CD4-positive, alpha-beta memory T cell (primary cell): ENCODE measurements at regions of chr12 and their contacts with region 1.

Region 1: GRCh38 chr12:47216150-47216677 is 136.5 kb upstream of the AMIGO2 start:
- DNase-seq: peak; percentile 71 to 87 (median 78)
- H3K4me3 ChIP-seq: peak overlapping the region; percentile 70 to 73
- H3K4me3 Mint-ChIP-seq: peak overlapping the region; percentile 92 to 99 (median 96)
- H3K27ac ChIP-seq: peak overlapping the region; percentile 65
- H3K27ac Mint-ChIP-seq: peak overlapping the region; percentile 92 to 97 (median 94)
- H3K4me1 ChIP-seq: peaks cover 32% of the 10 kb centered on the region
- H3K4me1 Mint-ChIP-seq: peaks cover 14 to 73% (median 27%) of the 10 kb centered on the region in 4 donors
- H3K27me3 ChIP-seq: no peaks in the 10 kb centered on the region
- H3K27me3 Mint-ChIP-seq: no peaks in the 10 kb centered on the region

Region 2: DNA sequence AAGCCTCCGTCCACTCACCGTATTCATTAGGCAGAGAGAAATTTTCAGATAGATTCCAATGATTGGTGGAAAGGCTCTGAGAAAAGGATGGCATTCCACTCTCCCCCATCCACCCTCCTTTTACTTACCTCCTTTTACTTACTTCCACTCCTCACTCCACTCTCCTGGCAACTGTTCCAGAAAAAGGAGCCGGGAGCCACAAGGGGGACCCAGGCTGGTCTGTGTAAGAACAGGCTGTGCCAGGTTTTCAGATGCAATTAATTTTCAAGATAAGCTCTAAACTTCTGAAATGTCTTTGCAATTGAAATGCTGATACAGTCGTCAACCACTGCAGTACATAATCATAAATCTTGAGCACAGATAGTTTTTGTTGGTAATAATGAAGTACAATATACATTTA is 1751.5 kb before region 1 on chr12:
- CTCF ChIA-PET with region 1: no interaction called
- POLR2A ChIA-PET with region 1: no interaction called
- intact Hi-C with region 1: no loop called
- DNase-seq: no peak
- H3K4me3 ChIP-seq: no peak overlapping the region
- H3K4me3 Mint-ChIP-seq: no peak overlapping the region
- H3K27ac ChIP-seq: no peak overlapping the region
- H3K27ac Mint-ChIP-seq: no peak overlapping the region
- H3K4me1 ChIP-seq: peaks cover 5% of the 10 kb centered on the region
- H3K4me1 Mint-ChIP-seq: peaks cover under 1 to 5% (median 2%) of the 10 kb centered on the region in 4 donors
- H3K27me3 ChIP-seq: no peaks in the 10 kb centered on the region
- H3K27me3 Mint-ChIP-seq: peaks cover 12 to 13% of the 10 kb centered on the region in 2 donors

Region 3: DNA sequence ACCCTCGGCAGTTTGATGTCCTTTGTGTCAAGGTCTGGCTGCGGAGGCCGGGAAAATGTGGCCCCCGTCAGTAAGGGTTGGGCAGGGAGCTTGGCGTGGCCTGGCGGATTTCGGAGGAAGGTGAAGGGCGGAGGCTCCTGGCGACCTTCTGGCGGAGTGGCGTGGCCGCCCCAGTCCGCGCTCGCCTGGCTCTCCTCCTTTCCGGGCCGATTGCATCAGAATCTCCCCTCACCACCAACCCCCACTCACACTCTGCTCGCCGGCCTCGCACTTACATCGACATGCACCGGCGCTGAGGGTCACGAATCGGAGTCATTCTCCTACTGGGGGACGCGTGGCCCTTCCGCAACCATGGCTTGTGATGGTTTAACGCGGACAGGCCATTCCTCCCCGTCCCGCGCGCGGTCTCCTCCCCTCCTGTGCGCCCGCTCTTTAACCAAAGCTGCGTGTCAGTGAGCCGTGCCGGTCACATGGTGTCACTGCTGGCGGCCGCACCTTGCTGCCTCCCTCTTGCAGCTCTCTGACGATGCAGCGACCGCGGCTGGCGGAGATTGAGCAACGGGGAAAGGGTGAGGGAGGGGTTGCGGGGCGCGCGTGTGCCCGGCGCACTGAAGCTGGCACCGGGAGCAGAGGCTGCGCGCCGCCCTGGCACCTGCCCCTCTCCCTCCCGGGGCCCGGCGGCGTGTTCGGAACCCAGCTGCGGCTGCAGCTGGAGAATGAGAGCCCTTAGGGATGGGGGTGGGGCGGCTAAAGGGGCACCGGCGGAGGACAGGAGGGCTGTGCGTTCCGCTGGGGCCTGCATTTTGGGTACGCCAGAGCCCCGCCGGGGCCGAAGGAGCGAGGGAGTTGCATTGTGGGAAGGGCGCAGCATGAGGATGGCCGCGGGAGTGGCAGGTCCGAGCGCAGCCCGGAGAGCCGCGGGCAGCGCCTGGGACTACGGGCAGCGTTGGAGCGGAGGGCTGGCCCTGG is 947.3 kb before region 1 on chr12 and contains the start of gene SLC38A1:
- CTCF ChIA-PET with region 1: no interaction called
- POLR2A ChIA-PET with region 1: interaction called, 5 read pairs
- intact Hi-C with region 1: loop called (anchors 5 kb)
- DNase-seq: peak; percentile 88 to 96 (median 89)
- H3K4me3 ChIP-seq: peak within 1 kb of the TSS; percentile 91 to 96
- H3K4me3 Mint-ChIP-seq: no peak within 1 kb of the TSS
- H3K27ac ChIP-seq: peak within 1 kb of the TSS; percentile 95
- H3K27ac Mint-ChIP-seq: no peak within 1 kb of the TSS
- H3K4me1 ChIP-seq: peaks cover 54% of the 10 kb centered on the region
- H3K4me1 Mint-ChIP-seq: peaks cover 16 to 47% (median 23%) of the 10 kb centered on the region in 4 donors
- H3K27me3 ChIP-seq: no peaks in the 10 kb centered on the region
- H3K27me3 Mint-ChIP-seq: no peaks in the 10 kb centered on the region
- total RNA-seq, gene SLC38A1: 265 to 272 TPM

Region 4: GRCh38 chr12:47079468-47079980 is 136.7 kb before region 1 on chr12 and contains the starts of genes AMIGO2 and PCED1B:
- CTCF ChIA-PET with region 1: interaction called, 16 read pairs
- POLR2A ChIA-PET with region 1: interaction called, 154 read pairs
- intact Hi-C with region 1: loop called (anchors 2 kb)
- DNase-seq: peak; percentile 43 to 63 (median 51)
- H3K4me3 ChIP-seq: peak within 1 kb of the TSS; percentile 91 to 92
- H3K4me3 Mint-ChIP-seq: peak within 1 kb of the TSS; percentile 96 to 99 (median 98)
- H3K27ac ChIP-seq: peak within 1 kb of the TSS; percentile 74
- H3K27ac Mint-ChIP-seq: peak within 1 kb of the TSS; percentile 92 to 99 (median 98)
- H3K4me1 ChIP-seq: peaks cover 66% of the 10 kb centered on the region
- H3K4me1 Mint-ChIP-seq: peaks cover 52 to 83% (median 66%) of the 10 kb centered on the region in 4 donors
- H3K27me3 ChIP-seq: no peaks in the 10 kb centered on the region
- H3K27me3 Mint-ChIP-seq: peaks cover 0 to 1% of the 10 kb centered on the region in 2 donors
- total RNA-seq, gene AMIGO2: 12.8 to 13.1 TPM
- total RNA-seq, gene PCED1B: 44.3 to 49.0 TPM

Region 5: DNA sequence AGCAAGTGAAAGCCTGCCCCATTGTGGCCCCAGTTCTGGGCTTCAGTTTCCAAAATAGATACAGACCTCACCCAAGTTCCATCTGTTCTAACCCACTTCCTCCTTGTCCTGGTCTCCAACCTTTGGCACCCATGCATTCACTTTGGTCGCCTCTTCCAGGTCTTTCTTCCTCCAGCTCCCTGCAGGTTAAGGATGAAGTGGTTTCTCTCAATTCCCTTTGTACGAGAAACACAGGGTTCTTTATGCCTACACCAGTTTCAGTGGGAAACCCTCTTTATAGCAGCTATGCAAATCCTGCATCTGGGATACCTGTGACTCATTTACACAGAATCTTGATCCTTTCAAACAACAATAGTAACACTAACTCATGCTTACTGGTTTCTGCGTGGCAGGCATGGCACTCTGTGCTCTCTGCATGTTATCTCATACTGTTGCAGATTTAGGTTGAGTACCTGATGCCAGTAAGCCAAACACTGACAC is 25.9 kb before region 1 on chr12:
- CTCF ChIA-PET with region 1: interaction called, 59 read pairs
- POLR2A ChIA-PET with region 1: interaction called, 354 read pairs
- intact Hi-C with region 1: no loop called
- DNase-seq: no peak
- H3K4me3 ChIP-seq: no peak overlapping the region
- H3K4me3 Mint-ChIP-seq: peak overlapping the region in 7 of 8 donors; percentile 8 to 93 (median 69)
- H3K27ac ChIP-seq: peak overlapping the region; percentile 42
- H3K27ac Mint-ChIP-seq: peak overlapping the region; percentile 62 to 95 (median 93)
- H3K4me1 ChIP-seq: peaks cover 80% of the 10 kb centered on the region
- H3K4me1 Mint-ChIP-seq: peaks cover 67 to 90% (median 78%) of the 10 kb centered on the region in 4 donors
- H3K27me3 ChIP-seq: no peaks in the 10 kb centered on the region
- H3K27me3 Mint-ChIP-seq: no peaks in the 10 kb centered on the region

Region 6: DNA sequence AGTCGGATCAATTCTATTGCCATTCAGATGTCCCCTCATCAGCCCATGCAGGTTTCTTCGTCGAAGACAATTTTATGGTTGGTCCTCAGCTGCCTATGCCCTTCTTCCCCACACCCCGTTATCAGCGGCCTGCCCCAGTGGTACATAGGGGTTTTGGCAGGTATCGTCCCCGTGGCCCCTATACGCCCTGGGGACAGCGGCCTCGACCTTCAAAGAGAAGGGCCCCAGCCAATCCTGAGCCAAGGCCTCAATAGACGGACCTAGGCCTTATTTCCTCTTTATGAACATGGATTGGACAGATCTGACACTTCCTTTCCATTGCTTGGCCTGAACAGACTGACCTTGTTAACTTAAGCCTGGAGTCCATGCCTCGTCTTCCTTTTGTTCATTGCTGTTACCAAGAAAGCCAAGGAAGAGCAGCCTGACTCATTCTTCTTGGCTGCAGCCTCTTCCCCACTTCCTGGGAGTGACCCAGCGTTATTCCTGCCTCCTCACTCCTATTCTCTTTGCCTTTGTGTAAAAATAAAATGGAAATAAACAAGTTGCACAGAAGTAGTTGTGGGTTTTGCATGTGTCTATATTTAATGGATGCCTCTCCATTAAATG is 20.0 kb after region 1 on chr12:
- CTCF ChIA-PET with region 1: interaction called, 5 read pairs
- POLR2A ChIA-PET with region 1: interaction called, 16 read pairs
- intact Hi-C with region 1: no loop called
- DNase-seq: no peak
- H3K4me3 ChIP-seq: no peak overlapping the region
- H3K4me3 Mint-ChIP-seq: peak overlapping the region in 4 of 8 donors; percentile 15 to 59 (median 48)
- H3K27ac ChIP-seq: no peak overlapping the region
- H3K27ac Mint-ChIP-seq: peak overlapping the region in 6 of 7 donors; percentile 9 to 86 (median 68)
- H3K4me1 ChIP-seq: peaks cover 41% of the 10 kb centered on the region
- H3K4me1 Mint-ChIP-seq: peaks cover 38 to 62% (median 51%) of the 10 kb centered on the region in 4 donors
- H3K27me3 ChIP-seq: no peaks in the 10 kb centered on the region
- H3K27me3 Mint-ChIP-seq: no peaks in the 10 kb centered on the region

Region 7: GRCh38 chr12:47307680-47308399 is 91.6 kb after region 1 on chr12:
- CTCF ChIA-PET with region 1: interaction called, 25 read pairs
- POLR2A ChIA-PET with region 1: interaction called, 55 read pairs
- intact Hi-C with region 1: loop called (anchors 1 kb)
- DNase-seq: peak; percentile 64 to 72 (median 66)
- H3K4me3 ChIP-seq: peak overlapping the region; percentile 78 to 82
- H3K4me3 Mint-ChIP-seq: peak overlapping the region; percentile 89 to 99 (median 94)
- H3K27ac ChIP-seq: peak overlapping the region; percentile 51
- H3K27ac Mint-ChIP-seq: peak overlapping the region; percentile 82 to 95 (median 93)
- H3K4me1 ChIP-seq: peaks cover 13% of the 10 kb centered on the region
- H3K4me1 Mint-ChIP-seq: peaks cover 21 to 43% (median 32%) of the 10 kb centered on the region in 4 donors
- H3K27me3 ChIP-seq: no peaks in the 10 kb centered on the region
- H3K27me3 Mint-ChIP-seq: no peaks in the 10 kb centered on the region